OCI-LY7 (cell line): ENCODE measurements at regions of chr22 and their contacts with region 1.

Region 1: GRCh38 chr22:50498322-50498890 is 9.1 kb downstream of the LMF2 start:
- DNase-seq: peak; percentile 80
- H3K4me3 ChIP-seq: no peak overlapping the region
- H3K27ac ChIP-seq: no peak overlapping the region
- H3K4me1 ChIP-seq: peaks cover 22% of the 10 kb centered on the region
- CTCF ChIP-seq: peak; percentile 89

Region 2: GRCh38 chr22:50399751-50400331 is 98.6 kb before region 1 on chr22:
- CTCF ChIA-PET with region 1: no interaction called
- POLR2A ChIA-PET with region 1: no interaction called
- intact Hi-C with region 1: loop called (anchors 1 kb)
- DNase-seq: peak; percentile 44
- H3K4me3 ChIP-seq: no peak overlapping the region
- H3K27ac ChIP-seq: no peak overlapping the region
- H3K4me1 ChIP-seq: no peaks in the 10 kb centered on the region
- CTCF ChIP-seq: peak; percentile 72

Region 3: GRCh38 chr22:50444663-50445062 is 53.7 kb before region 1 on chr22:
- CTCF ChIA-PET with region 1: no interaction called
- POLR2A ChIA-PET with region 1: no interaction called
- intact Hi-C with region 1: loop called (anchors 2 kb)
- DNase-seq: no peak
- H3K4me3 ChIP-seq: no peak overlapping the region
- H3K27ac ChIP-seq: peak overlapping the region; percentile 72
- H3K4me1 ChIP-seq: peaks cover 33% of the 10 kb centered on the region
- CTCF ChIP-seq: no peak

Region 4: DNA sequence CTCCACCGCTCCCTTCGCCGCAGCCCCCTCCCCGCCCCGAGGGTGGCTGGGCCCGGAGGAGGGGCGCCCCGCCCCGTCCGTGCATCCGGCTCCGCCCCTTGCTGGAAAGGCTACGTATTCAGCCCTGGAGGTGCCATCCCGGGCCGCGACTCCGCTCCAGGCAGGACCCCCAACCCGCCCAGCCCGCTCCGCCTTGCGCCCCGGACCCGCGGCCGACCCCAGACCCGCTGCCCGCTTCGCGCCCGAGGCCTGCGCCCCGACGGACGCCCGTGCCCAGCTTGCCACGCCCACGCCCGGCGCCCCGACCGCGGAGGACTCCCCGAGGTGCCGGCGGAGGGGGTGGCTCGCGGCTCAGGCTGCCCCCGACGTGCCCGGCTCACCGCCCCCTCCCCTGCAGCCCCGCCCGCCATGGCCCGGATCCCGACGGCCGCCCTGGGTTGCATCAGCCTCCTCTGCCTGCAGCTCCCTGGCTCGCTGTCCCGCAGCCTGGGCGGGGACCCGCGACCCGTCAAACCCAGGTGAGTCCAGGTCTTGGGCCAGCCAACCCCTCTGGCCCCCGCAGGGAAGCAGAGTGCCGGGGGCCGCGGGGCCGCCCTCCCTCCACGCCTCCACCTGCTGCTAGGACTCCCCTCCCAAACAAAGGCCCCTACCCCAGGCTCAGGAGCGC is 16.8 kb before region 1 on chr22 and contains the start of gene ADM2:
- CTCF ChIA-PET with region 1: no interaction called
- POLR2A ChIA-PET with region 1: no interaction called
- intact Hi-C with region 1: no loop called
- DNase-seq: peak; percentile 55
- H3K4me3 ChIP-seq: peak within 1 kb of the TSS; percentile 68
- H3K27ac ChIP-seq: no peak within 1 kb of the TSS
- H3K4me1 ChIP-seq: peaks cover 10% of the 10 kb centered on the region
- CTCF ChIP-seq: no peak
- total RNA-seq, gene ADM2: 2.7 and 4.3 TPM in 2 replicates